Ovary (tissue), 10 donors: ENCODE measurements at regions of chr7 and their contacts with region 1.

Region 1: DNA sequence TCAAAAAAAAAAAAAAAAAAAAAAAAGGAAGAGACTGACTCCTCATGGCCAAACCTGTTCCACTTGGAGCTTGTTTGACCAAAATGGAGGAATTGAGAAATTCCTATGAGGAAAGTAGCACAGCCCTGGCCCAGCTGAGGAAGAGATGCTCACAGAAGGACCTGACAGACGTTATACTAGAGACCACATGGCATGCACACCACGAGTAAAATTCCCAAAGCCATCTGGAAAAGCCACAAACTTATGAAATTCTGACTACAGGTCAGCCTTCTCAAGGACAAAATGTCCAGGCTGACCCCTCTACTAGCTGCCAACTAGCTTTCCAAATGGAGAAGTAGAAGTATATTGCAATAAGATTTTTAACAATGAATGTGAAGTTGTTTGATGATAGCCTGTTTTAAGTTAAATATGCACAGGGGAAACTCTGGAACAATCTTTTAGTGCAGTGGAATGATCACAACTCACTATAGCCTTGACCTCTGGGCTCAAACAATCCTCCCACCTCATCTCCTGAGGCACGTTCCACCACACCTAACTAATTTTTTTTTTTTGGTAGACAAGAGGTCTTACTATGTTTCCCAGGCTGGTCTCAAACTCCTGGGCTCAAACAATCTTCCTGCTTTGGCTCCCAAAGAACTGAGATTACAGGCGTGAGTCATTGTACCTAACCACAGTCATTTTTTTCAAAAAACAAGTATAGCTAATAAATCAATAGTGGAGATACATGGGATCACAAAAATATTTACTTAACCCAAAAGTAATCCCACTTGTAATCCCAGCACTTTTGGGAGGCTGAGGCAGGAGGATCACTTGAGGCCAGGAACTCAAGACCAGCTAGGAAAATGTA is 75.7 kb downstream of the AKR1D1 start:
- DNase-seq: no peak
- H3K4me3 ChIP-seq: no peak overlapping the region
- H3K27ac ChIP-seq: no peak overlapping the region
- H3K4me1 ChIP-seq: no peaks in the 10 kb centered on the region
- H3K27me3 ChIP-seq: no peaks in the 10 kb centered on the region
- CTCF ChIP-seq: no peak
- EP300 ChIP-seq: no peak
- POLR2A ChIP-seq: no peak

Region 2: GRCh38 chr7:138440460-138440859 is 288.5 kb after region 1 on chr7:
- intact Hi-C with region 1: no loop called
- DNase-seq: no peak
- H3K4me3 ChIP-seq: no peak overlapping the region
- H3K27ac ChIP-seq: no peak overlapping the region
- H3K4me1 ChIP-seq: no peaks in the 10 kb centered on the region
- H3K27me3 ChIP-seq: no peaks in the 10 kb centered on the region
- CTCF ChIP-seq: no peak
- EP300 ChIP-seq: no peak
- POLR2A ChIP-seq: no peak

Region 3: DNA sequence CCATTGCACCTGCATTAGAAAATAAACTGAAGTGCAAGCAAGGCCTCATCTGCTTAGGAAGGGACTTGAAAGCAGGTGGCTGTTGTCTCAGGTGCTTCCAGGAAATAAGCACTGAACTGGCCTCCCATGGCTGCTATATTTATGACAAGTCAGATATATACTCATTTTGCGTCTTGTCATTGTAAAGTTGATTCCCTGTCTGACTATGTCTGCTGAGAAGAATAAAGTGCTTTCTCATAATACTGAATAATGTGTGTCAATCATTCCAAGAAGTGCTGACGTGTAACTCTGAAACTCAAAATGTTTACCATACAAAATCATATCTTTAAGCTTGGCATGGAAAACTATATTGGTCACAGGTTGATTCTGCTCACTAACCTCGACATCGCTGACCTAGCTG is 594.1 kb after region 1 on chr7:
- intact Hi-C with region 1: loop called in 1 of 4 experiments (anchors 10 kb)
- DNase-seq: no peak
- H3K4me3 ChIP-seq: no peak overlapping the region
- H3K27ac ChIP-seq: no peak overlapping the region
- H3K4me1 ChIP-seq: no peaks in the 10 kb centered on the region
- H3K27me3 ChIP-seq: no peaks in the 10 kb centered on the region
- CTCF ChIP-seq: no peak
- EP300 ChIP-seq: no peak
- POLR2A ChIP-seq: no peak